PC-3 (cell line): ENCODE measurements at regions of chr11 and their contacts with region 1.

Region 1: DNA sequence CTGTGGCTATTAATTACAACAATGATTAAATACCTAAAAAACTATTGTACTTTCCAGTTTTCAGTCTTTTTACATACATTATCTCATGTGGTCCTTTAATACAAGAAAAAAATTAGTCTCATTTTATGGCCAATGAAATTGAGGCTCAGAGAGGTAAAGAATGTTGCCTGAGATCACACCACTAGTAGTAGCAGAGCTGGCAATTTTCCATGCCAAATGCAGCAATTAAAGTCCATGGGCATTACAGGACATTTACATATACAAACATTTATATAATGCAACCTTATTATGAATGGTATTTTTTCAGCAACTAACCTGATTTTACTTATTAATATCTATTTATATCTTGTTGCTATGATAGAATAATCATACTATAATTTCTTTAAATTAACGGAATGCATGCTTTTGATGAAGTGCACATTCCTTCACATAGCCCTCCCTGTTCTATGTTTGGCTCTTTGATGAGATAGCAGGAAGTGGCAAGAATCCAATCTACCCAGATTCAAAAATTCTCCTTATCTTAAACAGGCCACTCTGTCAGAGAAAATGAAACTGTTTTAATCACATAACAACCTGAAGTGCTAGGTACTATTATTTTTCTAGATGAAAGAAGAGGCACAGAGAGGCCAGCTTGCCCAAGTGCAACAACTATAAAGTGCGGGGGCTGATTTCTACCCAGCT is 120.9 kb upstream of the LDLRAD3 start:
- DNase-seq: peak; percentile 11
- ATAC-seq: no peak
- H3K4me3 ChIP-seq: no peak overlapping the region
- H3K27ac ChIP-seq: no peak overlapping the region
- H3K4me1 ChIP-seq: peaks cover 12% of the 10 kb centered on the region
- H3K27me3 ChIP-seq: no peaks in the 10 kb centered on the region
- CTCF ChIP-seq: no peak

Region 2: GRCh38 chr11:35714882-35715627 is 107.9 kb before region 1 on chr11:
- CTCF ChIA-PET with region 1: interaction called, 16 read pairs
- POLR2A ChIA-PET with region 1: no interaction called
- intact Hi-C with region 1: no loop called
- DNase-seq: peak; percentile 26
- ATAC-seq: peak; percentile 55
- H3K4me3 ChIP-seq: no peak overlapping the region
- H3K27ac ChIP-seq: no peak overlapping the region
- H3K4me1 ChIP-seq: no peaks in the 10 kb centered on the region
- H3K27me3 ChIP-seq: no peaks in the 10 kb centered on the region
- CTCF ChIP-seq: no peak

Region 3: GRCh38 chr11:35806036-35806435 is 16.9 kb before region 1 on chr11:
- CTCF ChIA-PET with region 1: no interaction called
- POLR2A ChIA-PET with region 1: no interaction called
- intact Hi-C with region 1: no loop called
- DNase-seq: no peak
- ATAC-seq: no peak
- H3K4me3 ChIP-seq: no peak overlapping the region
- H3K27ac ChIP-seq: no peak overlapping the region
- H3K4me1 ChIP-seq: no peaks in the 10 kb centered on the region
- H3K27me3 ChIP-seq: no peaks in the 10 kb centered on the region
- CTCF ChIP-seq: no peak

Region 4: GRCh38 chr11:35969089-35970042 is 146.4 kb after region 1 on chr11:
- CTCF ChIA-PET with region 1: interaction called, 10 read pairs
- POLR2A ChIA-PET with region 1: no interaction called
- intact Hi-C with region 1: no loop called
- DNase-seq: peak; percentile 60
- ATAC-seq: peak; percentile 91
- H3K4me3 ChIP-seq: no peak overlapping the region
- H3K27ac ChIP-seq: peak overlapping the region; percentile 71
- H3K4me1 ChIP-seq: peaks cover 20% of the 10 kb centered on the region
- H3K27me3 ChIP-seq: no peaks in the 10 kb centered on the region
- CTCF ChIP-seq: no peak

Region 5: DNA sequence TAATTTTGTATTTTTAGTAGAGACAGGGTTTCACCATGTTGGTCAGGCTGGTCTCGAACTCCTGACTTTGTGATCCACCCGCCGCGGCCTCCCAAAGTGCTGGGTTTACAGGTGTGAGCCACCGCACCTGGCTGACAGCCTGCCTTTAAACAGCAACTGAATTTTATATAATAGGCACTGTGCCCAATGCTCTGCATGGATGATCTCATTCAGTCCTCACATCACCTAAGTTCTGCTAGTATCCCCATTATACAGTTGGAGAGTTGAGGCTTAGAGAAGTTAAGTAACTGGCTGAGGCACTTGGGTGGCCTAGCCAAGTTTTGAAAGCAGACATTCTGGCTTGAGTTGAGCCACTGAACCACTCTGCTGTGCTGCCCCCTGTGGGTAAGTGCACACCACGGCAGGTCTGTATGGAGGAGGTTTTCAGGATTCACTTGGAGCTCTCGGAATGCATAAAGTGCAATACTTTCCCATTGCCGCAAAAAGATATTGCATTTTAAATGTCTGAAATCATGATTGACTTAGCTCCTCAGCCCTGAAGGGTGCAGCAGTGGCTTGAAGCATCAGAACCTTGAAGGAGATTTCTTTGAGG is 233.3 kb after region 1 on chr11:
- CTCF ChIA-PET with region 1: interaction called, 9 read pairs
- POLR2A ChIA-PET with region 1: no interaction called
- intact Hi-C with region 1: loop called (anchors 1 kb)
- DNase-seq: peak; percentile 65
- ATAC-seq: peak; percentile 58; the same call in 1 of the 2 replicates
- H3K4me3 ChIP-seq: no peak overlapping the region
- H3K27ac ChIP-seq: no peak overlapping the region
- H3K4me1 ChIP-seq: no peaks in the 10 kb centered on the region
- H3K27me3 ChIP-seq: no peaks in the 10 kb centered on the region
- CTCF ChIP-seq: peak; percentile 84

Region 6: GRCh38 chr11:36109850-36110606 is 287.1 kb after region 1 on chr11:
- CTCF ChIA-PET with region 1: no interaction called
- POLR2A ChIA-PET with region 1: no interaction called
- intact Hi-C with region 1: no loop called
- DNase-seq: no peak
- ATAC-seq: no peak
- H3K4me3 ChIP-seq: no peak overlapping the region
- H3K27ac ChIP-seq: no peak overlapping the region
- H3K4me1 ChIP-seq: no peaks in the 10 kb centered on the region
- H3K27me3 ChIP-seq: no peaks in the 10 kb centered on the region
- CTCF ChIP-seq: no peak

Region 7: DNA sequence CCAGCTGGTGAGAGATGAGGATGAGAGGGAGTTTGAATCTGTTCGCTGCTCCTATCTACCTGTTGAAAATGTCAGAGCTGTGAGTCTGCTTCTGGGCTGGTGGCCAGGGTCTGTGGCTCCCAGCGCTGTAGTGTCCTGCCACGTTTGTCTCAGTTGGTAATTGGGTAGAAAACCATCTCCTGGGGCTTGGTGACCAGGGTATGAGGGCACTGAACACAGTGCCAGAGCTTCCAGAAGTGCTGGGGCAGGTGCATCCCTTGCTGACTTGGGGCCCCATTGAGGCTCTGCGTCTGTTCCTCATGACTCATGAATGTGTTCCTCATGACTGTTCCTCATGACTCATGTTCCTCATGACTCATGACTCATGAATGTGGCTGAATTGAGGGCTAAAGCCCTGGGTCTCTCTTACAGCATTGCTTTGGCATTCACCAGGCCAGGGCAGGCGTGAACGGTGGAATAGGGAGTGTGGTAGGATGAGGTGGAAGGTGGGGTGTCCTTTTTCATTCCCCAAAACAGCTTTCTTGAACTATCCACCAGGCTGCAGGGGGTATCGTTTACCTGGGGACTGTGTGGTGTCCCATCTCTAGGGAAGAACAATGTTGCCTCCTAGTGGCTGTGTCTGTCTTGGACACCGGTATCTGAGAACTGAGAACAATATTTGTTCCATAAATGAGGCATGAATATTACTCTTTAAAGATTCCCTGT is 326.7 kb after region 1 on chr11:
- CTCF ChIA-PET with region 1: interaction called, 18 read pairs
- POLR2A ChIA-PET with region 1: no interaction called
- intact Hi-C with region 1: loop called (anchors 1 kb)
- DNase-seq: peak; percentile 99
- ATAC-seq: peak; percentile 96
- H3K4me3 ChIP-seq: peak overlapping the region; percentile 10; the same call in 1 of the 2 replicates
- H3K27ac ChIP-seq: peak overlapping the region; percentile 70
- H3K4me1 ChIP-seq: peaks cover 29% of the 10 kb centered on the region
- H3K27me3 ChIP-seq: no peaks in the 10 kb centered on the region
- CTCF ChIP-seq: peak; percentile 79

Region 8: DNA sequence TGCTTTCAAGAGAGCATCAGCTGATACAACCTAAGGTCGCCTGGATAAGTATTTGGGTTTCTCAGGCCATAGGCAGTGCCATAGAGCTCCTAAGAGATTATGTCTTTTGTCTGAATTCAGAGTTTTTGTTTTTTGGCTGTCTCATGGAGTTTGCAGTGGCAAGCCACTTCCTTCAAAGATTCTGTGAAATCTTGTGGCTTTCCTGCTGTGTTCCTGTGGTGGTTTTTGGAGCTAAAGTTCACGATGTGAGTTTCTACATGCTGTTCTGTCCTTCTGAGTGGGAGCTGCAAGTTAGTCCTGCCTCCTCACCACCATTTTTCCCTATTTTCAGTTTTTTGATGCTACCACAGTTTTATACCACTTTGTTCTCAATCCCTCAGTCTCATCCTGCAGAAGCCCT is 354.9 kb after region 1 on chr11:
- CTCF ChIA-PET with region 1: no interaction called
- POLR2A ChIA-PET with region 1: no interaction called
- intact Hi-C with region 1: no loop called
- DNase-seq: no peak
- ATAC-seq: no peak
- H3K4me3 ChIP-seq: no peak overlapping the region
- H3K27ac ChIP-seq: no peak overlapping the region
- H3K4me1 ChIP-seq: no peaks in the 10 kb centered on the region
- H3K27me3 ChIP-seq: no peaks in the 10 kb centered on the region
- CTCF ChIP-seq: no peak